Activated B cell treated with CpG ODN at 0.5 μM for 24 hours (primary cell): ENCODE measurements at regions of chr22 and their contacts with region 1.

Region 1: GRCh38 chr22:40950962-40951794 is at the start of gene RBX1:
- DNase-seq: peak; percentile 96
- ATAC-seq: peak; percentile 83
- H3K4me3 Mint-ChIP-seq: peak within 1 kb of the TSS; percentile 100
- H3K27ac Mint-ChIP-seq: peak within 1 kb of the TSS; percentile 100
- H3K4me1 Mint-ChIP-seq: peaks cover 30% of the 10 kb centered on the region
- H3K27me3 Mint-ChIP-seq: no peaks in the 10 kb centered on the region
- CTCF ChIP-seq: no peak
- total RNA-seq, gene RBX1: 78.6 and 78.9 TPM in 2 replicates

Region 2: GRCh38 chr22:40922484-40923303 is 28.5 kb before region 1 on chr22:
- CTCF ChIA-PET with region 1: interaction called, 21 read pairs
- POLR2A ChIA-PET with region 1: interaction called, 58 read pairs
- intact Hi-C with region 1: loop called (anchors 1 kb)
- DNase-seq: no peak
- ATAC-seq: peak; percentile 86
- H3K4me3 Mint-ChIP-seq: peak overlapping the region; percentile 15
- H3K27ac Mint-ChIP-seq: peak overlapping the region; percentile 6
- H3K4me1 Mint-ChIP-seq: peaks cover 4% of the 10 kb centered on the region
- H3K27me3 Mint-ChIP-seq: no peaks in the 10 kb centered on the region
- CTCF ChIP-seq: no peak

Region 3: DNA sequence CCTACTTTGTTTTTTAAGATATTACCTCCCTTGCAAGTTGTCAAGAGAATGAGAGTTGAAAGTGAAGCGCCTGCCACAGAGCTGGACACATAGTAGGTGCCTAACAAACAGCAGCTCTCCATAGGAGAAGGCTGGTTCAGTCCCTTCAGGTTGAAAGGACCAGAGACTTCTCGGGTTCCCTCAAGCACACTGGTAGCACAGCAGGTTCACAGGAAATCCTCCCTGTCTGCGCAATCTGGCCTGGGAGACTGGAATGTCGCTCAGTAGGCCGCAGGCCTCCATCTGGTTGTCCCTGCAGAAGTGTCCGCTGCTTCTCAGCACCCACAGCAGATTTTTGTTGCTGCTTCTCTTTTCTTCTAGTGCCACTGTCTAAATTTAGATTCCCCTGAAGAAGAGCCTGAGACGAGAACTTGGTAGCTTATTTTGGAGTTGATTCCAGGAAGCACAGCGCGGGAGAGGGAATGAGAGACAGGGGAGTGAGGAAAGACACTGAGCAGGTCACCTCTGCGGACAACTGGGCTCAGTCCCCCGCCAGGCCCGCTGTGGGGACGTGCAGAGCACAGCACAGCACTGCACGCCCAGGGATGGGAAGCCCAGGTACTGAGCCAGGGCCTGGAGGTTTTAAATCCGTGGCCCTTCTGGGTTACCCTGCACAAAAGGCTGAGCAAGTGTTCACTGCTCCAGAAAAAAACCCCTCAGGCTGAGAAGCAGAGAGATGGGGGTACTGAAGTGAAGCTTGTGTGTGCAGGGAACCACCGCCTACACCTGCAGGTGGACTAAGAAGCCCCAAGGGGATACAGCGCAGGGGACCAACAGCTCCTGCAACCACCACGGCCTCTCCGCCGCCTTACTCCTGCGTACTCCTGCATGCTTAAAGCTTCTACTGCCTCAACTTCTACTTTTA is 31.6 kb after region 1 on chr22:
- CTCF ChIA-PET with region 1: no interaction called
- POLR2A ChIA-PET with region 1: interaction called, 15 read pairs
- intact Hi-C with region 1: no loop called
- DNase-seq: peak; percentile 31
- ATAC-seq: peak; percentile 99
- H3K4me3 Mint-ChIP-seq: peak overlapping the region; percentile 50
- H3K27ac Mint-ChIP-seq: no peak overlapping the region
- H3K4me1 Mint-ChIP-seq: peaks cover 16% of the 10 kb centered on the region
- H3K27me3 Mint-ChIP-seq: no peaks in the 10 kb centered on the region
- CTCF ChIP-seq: no peak

Region 4: DNA sequence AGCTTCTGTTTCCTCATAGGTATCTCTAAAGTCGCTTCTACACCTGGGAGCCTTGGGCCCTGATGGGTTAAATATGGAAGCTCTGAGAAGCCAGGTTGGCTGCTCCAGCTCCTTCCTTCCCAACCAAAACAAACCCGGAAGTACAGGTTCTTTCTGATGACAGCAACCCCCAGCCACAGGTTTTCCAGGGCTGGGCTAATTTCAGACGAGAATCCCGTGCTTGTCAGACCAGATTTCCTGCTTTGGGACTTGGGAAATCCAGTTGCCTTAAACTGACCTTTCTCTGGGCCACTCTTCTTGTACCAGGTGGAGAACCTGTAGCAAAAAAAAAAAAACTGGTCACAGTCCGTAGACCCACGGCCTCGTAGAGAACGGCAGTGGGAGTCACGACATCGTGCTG is 51.9 kb after region 1 on chr22:
- CTCF ChIA-PET with region 1: no interaction called
- POLR2A ChIA-PET with region 1: no interaction called
- intact Hi-C with region 1: no loop called
- DNase-seq: no peak
- ATAC-seq: no peak
- H3K4me3 Mint-ChIP-seq: no peak overlapping the region
- H3K27ac Mint-ChIP-seq: no peak overlapping the region
- H3K4me1 Mint-ChIP-seq: no peaks in the 10 kb centered on the region
- H3K27me3 Mint-ChIP-seq: no peaks in the 10 kb centered on the region
- CTCF ChIP-seq: no peak

Region 5: DNA sequence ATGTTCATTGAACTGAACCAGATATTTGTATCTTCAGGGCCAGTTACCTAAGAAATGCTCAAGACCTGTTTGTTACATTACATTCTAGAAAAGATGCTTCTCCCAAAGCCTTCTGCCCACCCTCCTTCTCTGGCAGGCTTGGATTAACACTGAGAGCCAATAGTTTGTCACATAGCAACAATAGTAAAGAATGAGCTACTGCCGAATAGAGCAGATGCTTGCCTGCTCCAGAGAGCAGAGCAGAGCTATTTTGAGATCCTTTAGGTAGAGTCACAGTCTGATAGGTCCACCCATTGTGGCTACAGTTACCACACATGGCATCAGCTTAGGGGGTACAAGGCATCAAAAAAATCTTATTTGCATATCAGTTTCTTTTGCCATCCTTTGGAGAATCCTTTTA is 127.8 kb after region 1 on chr22:
- CTCF ChIA-PET with region 1: no interaction called
- POLR2A ChIA-PET with region 1: interaction called, 13 read pairs
- intact Hi-C with region 1: no loop called
- DNase-seq: no peak
- ATAC-seq: peak; percentile 90
- H3K4me3 Mint-ChIP-seq: peak overlapping the region; percentile 35
- H3K27ac Mint-ChIP-seq: peak overlapping the region; percentile 37
- H3K4me1 Mint-ChIP-seq: peaks cover 25% of the 10 kb centered on the region
- H3K27me3 Mint-ChIP-seq: no peaks in the 10 kb centered on the region
- CTCF ChIP-seq: no peak

Region 6: GRCh38 chr22:41140365-41140957 is 189.3 kb after region 1 on chr22:
- CTCF ChIA-PET with region 1: no interaction called
- POLR2A ChIA-PET with region 1: no interaction called
- intact Hi-C with region 1: no loop called
- DNase-seq: no peak
- ATAC-seq: no peak
- H3K4me3 Mint-ChIP-seq: no peak overlapping the region
- H3K27ac Mint-ChIP-seq: no peak overlapping the region
- H3K4me1 Mint-ChIP-seq: no peaks in the 10 kb centered on the region
- H3K27me3 Mint-ChIP-seq: no peaks in the 10 kb centered on the region
- CTCF ChIP-seq: no peak

Region 7: DNA sequence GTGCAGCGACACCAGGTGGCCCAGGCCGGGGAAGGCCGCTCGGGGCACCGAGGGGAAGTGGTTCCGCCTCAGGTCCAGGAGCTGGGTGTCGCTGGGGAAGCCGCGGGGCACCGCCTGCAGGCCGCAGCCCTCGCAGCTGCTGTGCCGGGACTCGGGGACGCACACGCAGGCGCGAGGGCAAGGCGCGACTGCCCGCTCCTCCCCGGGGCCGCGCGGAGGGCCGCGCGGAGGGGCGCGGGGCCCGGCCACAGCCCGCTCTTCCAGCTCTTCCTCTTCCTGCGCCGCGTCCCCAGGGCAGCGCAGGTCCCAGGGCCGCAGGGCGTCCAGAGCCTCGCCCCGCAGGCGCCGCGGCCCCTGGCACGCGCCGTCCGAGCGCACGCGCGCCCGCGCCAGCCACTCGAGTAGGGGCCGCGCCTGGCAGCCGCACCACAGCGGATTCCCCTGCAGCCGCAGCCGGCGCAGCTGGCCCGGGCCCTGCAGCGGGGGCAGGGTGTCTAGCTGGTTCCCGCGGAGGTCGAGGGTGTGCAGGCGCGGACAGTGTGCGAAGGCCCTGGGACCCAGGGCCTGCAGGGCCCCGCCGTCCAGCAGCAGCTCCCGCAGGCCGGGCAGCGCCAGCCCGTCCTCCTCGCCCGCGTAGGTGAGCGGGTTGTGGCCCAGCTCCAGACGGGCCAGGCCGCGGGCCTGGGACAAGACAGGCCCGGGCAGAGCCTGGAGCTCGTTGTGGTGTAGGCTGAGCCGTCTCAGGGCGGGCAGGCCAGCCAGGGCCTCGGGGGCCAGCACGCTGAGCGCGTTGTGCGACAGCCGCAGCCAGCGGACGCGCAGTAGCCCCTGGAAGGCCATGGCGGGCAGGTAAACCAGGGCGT is 286.8 kb after region 1 on chr22:
- CTCF ChIA-PET with region 1: interaction called, 4 read pairs
- POLR2A ChIA-PET with region 1: interaction called, 10 read pairs
- intact Hi-C with region 1: no loop called
- DNase-seq: peak; percentile 78
- ATAC-seq: peak; percentile 97
- H3K4me3 Mint-ChIP-seq: peak overlapping the region; percentile 64
- H3K27ac Mint-ChIP-seq: no peak overlapping the region
- H3K4me1 Mint-ChIP-seq: peaks cover 8% of the 10 kb centered on the region
- H3K27me3 Mint-ChIP-seq: no peaks in the 10 kb centered on the region
- CTCF ChIP-seq: no peak